ENCODE measurements at regions of chr7 and their contacts with region 1.

Region 1: GRCh38 chr7:44838751-44839150 is 9.1 kb downstream of the H2AZ2 start:
- DNase-seq: no peak
- ATAC-seq: no peak
- H3K4me3 ChIP-seq: no peak overlapping the region
- H3K27ac ChIP-seq: no peak overlapping the region
- H3K4me1 ChIP-seq: no peaks in the 10 kb centered on the region
- H3K27me3 ChIP-seq: no peaks in the 10 kb centered on the region

Region 2: GRCh38 chr7:44654255-44654796 is 184.4 kb before region 1 on chr7:
- intact Hi-C with region 1: no loop called
- DNase-seq: peak in 1 of 2 donors; percentile 24
- ATAC-seq: no peak
- H3K4me3 ChIP-seq: no peak overlapping the region
- H3K27ac ChIP-seq: no peak overlapping the region
- H3K4me1 ChIP-seq: no peaks in the 10 kb centered on the region
- H3K27me3 ChIP-seq: no peaks in the 10 kb centered on the region

Region 3: DNA sequence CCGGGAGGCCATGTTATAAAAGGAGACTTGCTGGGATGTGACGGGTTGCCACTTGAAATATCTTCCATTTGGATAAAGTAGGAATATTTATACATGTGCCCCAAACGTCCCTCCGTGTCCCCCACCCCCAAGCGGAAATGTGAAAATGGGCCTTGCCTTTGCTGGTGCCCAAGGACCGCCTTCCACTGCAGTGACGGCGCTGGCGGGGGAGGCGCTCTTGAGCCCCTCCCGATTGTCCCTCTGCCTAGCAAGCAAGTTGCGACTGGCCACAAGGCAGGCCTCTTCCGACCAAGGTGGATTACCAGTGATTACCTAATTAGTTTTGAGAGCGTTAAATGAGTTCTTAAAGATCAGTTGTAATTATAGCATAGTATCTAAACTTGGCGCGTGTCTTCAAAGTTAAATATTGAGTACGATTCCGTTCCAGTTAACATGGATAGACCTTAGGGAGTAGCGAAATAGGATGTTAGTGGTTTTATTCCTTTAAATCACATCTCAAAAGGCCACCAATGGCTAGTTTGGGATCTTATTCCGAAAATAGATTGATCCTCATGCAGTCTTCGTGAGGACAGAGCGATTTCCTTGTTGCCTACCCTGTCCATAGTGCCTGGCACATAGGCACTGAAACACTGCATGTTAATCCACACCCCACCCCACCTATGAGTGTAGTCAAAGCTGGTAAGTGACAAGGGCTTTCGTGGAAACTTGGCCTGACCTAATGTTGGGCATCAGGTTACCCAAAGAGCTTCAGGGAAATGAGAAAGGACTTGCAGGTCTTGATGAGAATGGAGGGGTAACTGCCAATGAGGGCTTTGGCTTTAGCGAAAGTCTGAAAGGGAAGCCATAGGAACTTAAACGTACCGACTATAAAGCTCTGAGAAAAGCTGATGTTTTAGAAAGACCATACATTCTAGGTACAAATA is 41.2 kb before region 1 on chr7:
- intact Hi-C with region 1: loop called in 1 of 2 experiments (anchors 5 kb)
- DNase-seq: peak; percentile 94 to 95
- ATAC-seq: peak; percentile 92
- H3K4me3 ChIP-seq: peak overlapping the region; percentile 61 to 74
- H3K27ac ChIP-seq: peak overlapping the region; percentile 84 to 93
- H3K4me1 ChIP-seq: peaks cover 0 to 4% of the 10 kb centered on the region in 2 donors
- H3K27me3 ChIP-seq: no peaks in the 10 kb centered on the region

Measured in aorta (tissue), 5 donors.